Naive thymus-derived CD4-positive, alpha-beta T cell (primary cell): ENCODE measurements at regions of chr2 and their contacts with region 1.

Region 1: GRCh38 chr2:219160186-219161017 is at the start of gene NHEJ1:
- DNase-seq: peak; percentile 84 to 98 (median 92)
- ATAC-seq: peak; percentile 96
- H3K4me3 ChIP-seq: peak within 1 kb of the TSS; percentile 70
- H3K4me3 Mint-ChIP-seq: peak within 1 kb of the TSS; percentile 88 to 97 (median 93)
- H3K27ac ChIP-seq: peak within 1 kb of the TSS; percentile 77
- H3K27ac Mint-ChIP-seq: peak within 1 kb of the TSS; percentile 81 to 97 (median 93)
- H3K4me1 ChIP-seq: peaks cover 11 to 12% of the 10 kb centered on the region in 2 donors
- H3K4me1 Mint-ChIP-seq: peaks cover 13 to 41% (median 24%) of the 10 kb centered on the region in 7 donors
- H3K27me3 ChIP-seq: no peaks in the 10 kb centered on the region
- H3K27me3 Mint-ChIP-seq: no peaks in the 10 kb centered on the region
- total RNA-seq, gene NHEJ1: 11.4 to 24.0 (median 17.9) TPM

Region 2: DNA sequence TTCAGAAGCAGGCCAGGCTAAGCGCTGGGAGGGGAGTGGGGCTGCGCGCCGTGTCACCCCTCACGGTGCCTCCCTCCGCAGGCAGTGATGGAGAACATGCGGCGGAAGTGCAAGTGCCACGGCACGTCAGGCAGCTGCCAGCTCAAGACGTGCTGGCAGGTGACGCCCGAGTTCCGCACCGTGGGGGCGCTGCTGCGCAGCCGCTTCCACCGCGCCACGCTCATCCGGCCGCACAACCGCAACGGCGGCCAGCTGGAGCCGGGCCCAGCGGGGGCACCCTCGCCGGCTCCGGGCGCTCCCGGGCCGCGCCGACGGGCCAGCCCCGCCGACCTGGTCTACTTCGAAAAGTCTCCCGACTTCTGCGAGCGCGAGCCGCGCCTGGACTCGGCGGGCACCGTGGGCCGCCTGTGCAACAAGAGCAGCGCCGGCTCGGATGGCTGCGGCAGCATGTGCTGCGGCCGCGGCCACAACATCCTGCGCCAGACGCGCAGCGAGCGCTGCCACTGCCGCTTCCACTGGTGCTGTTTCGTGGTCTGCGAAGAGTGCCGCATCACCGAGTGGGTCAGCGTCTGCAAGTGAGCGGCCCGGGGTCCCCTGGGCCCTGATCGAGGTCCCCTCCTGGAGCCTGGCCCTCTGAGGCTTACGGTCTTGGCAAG is 267.6 kb before region 1 on chr2:
- CTCF ChIA-PET with region 1: no interaction called
- POLR2A ChIA-PET with region 1: no interaction called
- intact Hi-C with region 1: loop called (anchors 5 kb)
- DNase-seq: peak; percentile 82 to 93 (median 91)
- ATAC-seq: peak; percentile 78
- H3K4me3 ChIP-seq: peak overlapping the region; percentile 48
- H3K4me3 Mint-ChIP-seq: peak overlapping the region; percentile 58 to 85 (median 75)
- H3K27ac ChIP-seq: peak overlapping the region; percentile 89
- H3K27ac Mint-ChIP-seq: peak overlapping the region; percentile 59 to 96 (median 89)
- H3K4me1 ChIP-seq: peaks cover 53 to 54% of the 10 kb centered on the region in 2 donors
- H3K4me1 Mint-ChIP-seq: peaks cover 38 to 56% (median 52%) of the 10 kb centered on the region in 7 donors
- H3K27me3 ChIP-seq: no peaks in the 10 kb centered on the region
- H3K27me3 Mint-ChIP-seq: peaks cover 0 to 76% (median 0%) of the 10 kb centered on the region in 5 donors

Region 3: DNA sequence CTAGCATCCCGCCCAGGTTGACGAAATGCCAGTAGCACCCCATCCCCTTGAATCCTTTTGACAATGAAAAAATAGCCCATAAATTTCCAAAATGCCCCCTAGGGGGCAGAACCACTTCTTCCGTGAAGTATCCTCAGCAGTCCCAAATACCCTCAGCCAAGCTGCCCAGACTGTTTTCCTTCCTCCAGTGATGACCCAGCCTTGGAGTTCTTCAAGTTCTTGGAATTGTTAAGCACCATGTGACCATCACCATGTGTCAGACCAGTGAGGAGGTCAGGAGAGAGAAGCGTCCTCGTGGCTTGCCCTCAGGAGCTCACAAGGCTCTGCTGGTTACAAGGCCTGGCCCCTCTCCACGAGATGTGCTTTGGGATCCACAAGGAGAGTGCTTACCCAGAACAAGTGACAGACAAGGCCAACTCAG is 10.8 kb after region 1 on chr2:
- CTCF ChIA-PET with region 1: interaction called, 20 read pairs
- POLR2A ChIA-PET with region 1: interaction called, 32 read pairs
- intact Hi-C with region 1: loop called in 1 of 2 experiments (anchors 1 kb)
- DNase-seq: peak in 7 of 9 donors; percentile 21 to 55 (median 50)
- ATAC-seq: peak; percentile 69
- H3K4me3 ChIP-seq: no peak overlapping the region
- H3K4me3 Mint-ChIP-seq: no peak overlapping the region
- H3K27ac ChIP-seq: peak overlapping the region; percentile 40
- H3K27ac Mint-ChIP-seq: peak overlapping the region in 7 of 9 donors; percentile 21 to 89 (median 65)
- H3K4me1 ChIP-seq: peaks cover 18 to 27% of the 10 kb centered on the region in 2 donors
- H3K4me1 Mint-ChIP-seq: peaks cover 33 to 44% (median 37%) of the 10 kb centered on the region in 7 donors
- H3K27me3 ChIP-seq: no peaks in the 10 kb centered on the region
- H3K27me3 Mint-ChIP-seq: no peaks in the 10 kb centered on the region

Region 4: GRCh38 chr2:219229305-219230058 is 69.1 kb after region 1 on chr2 and contains the starts of genes ANKZF1 and ATG9A:
- CTCF ChIA-PET with region 1: interaction called, 3 read pairs
- POLR2A ChIA-PET with region 1: interaction called, 3 read pairs
- intact Hi-C with region 1: loop called (anchors 1 kb)
- DNase-seq: peak; percentile 92 to 99 (median 99)
- ATAC-seq: peak; percentile 98
- H3K4me3 ChIP-seq: peak within 1 kb of the TSS; percentile 80
- H3K4me3 Mint-ChIP-seq: peak within 1 kb of the TSS; percentile 94 to 100 (median 98)
- H3K27ac ChIP-seq: peak within 1 kb of the TSS; percentile 90
- H3K27ac Mint-ChIP-seq: peak within 1 kb of the TSS; percentile 96 to 100 (median 96)
- H3K4me1 ChIP-seq: peaks cover 17 to 22% of the 10 kb centered on the region in 2 donors
- H3K4me1 Mint-ChIP-seq: peaks cover 33 to 83% (median 69%) of the 10 kb centered on the region in 7 donors
- H3K27me3 ChIP-seq: no peaks in the 10 kb centered on the region
- H3K27me3 Mint-ChIP-seq: no peaks in the 10 kb centered on the region
- total RNA-seq, gene ANKZF1: 117 to 287 (median 169) TPM
- total RNA-seq, gene ATG9A: 52.6 to 66.0 (median 60.9) TPM

Region 5: GRCh38 chr2:219294356-219295351 is 134.3 kb after region 1 on chr2:
- CTCF ChIA-PET with region 1: interaction called, 35 read pairs
- POLR2A ChIA-PET with region 1: interaction called, 6 read pairs
- intact Hi-C with region 1: loop called (anchors 1 kb)
- DNase-seq: peak; percentile 80 to 93 (median 90)
- ATAC-seq: peak; percentile 99
- H3K4me3 ChIP-seq: peak overlapping the region; percentile 47
- H3K4me3 Mint-ChIP-seq: peak overlapping the region; percentile 68 to 89 (median 82)
- H3K27ac ChIP-seq: peak overlapping the region; percentile 79
- H3K27ac Mint-ChIP-seq: peak overlapping the region; percentile 56 to 88 (median 84)
- H3K4me1 ChIP-seq: peaks cover 2 to 20% of the 10 kb centered on the region in 2 donors
- H3K4me1 Mint-ChIP-seq: peaks cover 11 to 34% (median 27%) of the 10 kb centered on the region in 7 donors
- H3K27me3 ChIP-seq: no peaks in the 10 kb centered on the region
- H3K27me3 Mint-ChIP-seq: peaks cover 0 to 9% (median 0%) of the 10 kb centered on the region in 5 donors

Region 6: GRCh38 chr2:219344751-219345430 is 184.5 kb after region 1 on chr2:
- CTCF ChIA-PET with region 1: no interaction called
- POLR2A ChIA-PET with region 1: no interaction called
- intact Hi-C with region 1: no loop called
- DNase-seq: no peak
- ATAC-seq: no peak
- H3K4me3 ChIP-seq: no peak overlapping the region
- H3K4me3 Mint-ChIP-seq: no peak overlapping the region
- H3K27ac ChIP-seq: no peak overlapping the region
- H3K27ac Mint-ChIP-seq: no peak overlapping the region
- H3K4me1 ChIP-seq: no peaks in the 10 kb centered on the region
- H3K4me1 Mint-ChIP-seq: peaks cover 0 to 8% (median 0%) of the 10 kb centered on the region in 7 donors
- H3K27me3 ChIP-seq: no peaks in the 10 kb centered on the region
- H3K27me3 Mint-ChIP-seq: peaks cover 17 to 41% (median 32%) of the 10 kb centered on the region in 5 donors

Region 7: DNA sequence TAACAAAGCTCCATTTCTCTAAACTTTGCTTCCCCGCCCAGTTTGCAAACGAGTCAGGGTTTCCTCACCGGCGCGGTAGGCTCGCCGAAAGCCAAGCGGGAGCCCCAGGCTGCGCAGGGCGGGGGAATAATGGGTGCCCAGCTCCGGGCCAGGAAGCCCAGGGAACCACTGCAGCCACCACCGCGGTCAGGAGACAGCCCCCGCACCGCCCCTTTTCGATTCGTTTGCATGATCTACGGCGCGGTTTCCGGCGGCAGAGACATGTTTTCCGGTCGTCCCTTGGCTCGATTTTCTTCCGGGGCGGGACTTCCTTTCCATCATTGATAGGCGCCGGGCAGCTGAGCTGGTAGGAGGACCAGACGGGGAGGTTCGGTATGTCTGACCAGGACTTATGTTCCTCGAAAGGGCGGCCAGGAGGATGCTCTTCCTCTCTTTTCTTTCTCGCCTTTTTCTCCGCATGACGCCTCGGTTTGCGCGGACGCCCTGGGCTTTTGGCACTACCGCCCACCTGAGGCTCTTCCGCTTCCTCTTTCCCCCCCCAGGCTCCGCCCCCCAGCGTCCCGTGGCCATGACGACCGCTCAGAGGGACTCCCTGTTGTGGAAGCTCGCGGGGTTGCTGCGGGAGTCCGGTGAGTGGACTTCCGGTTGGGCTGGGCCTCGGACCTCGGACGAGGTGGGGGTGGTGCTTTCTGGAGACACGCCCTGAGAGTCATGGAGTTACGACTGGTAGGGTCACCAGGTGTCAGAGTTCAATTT is 437.3 kb after region 1 on chr2 and contains the start of gene STK11IP:
- CTCF ChIA-PET with region 1: no interaction called
- POLR2A ChIA-PET with region 1: no interaction called
- intact Hi-C with region 1: loop called in 1 of 2 experiments (anchors 5 kb)
- DNase-seq: peak; percentile 76 to 91 (median 87)
- ATAC-seq: peak; percentile 91
- H3K4me3 ChIP-seq: peak within 1 kb of the TSS; percentile 86
- H3K4me3 Mint-ChIP-seq: peak within 1 kb of the TSS; percentile 89 to 99 (median 96)
- H3K27ac ChIP-seq: peak within 1 kb of the TSS; percentile 80
- H3K27ac Mint-ChIP-seq: peak within 1 kb of the TSS; percentile 93 to 98 (median 94)
- H3K4me1 ChIP-seq: peaks cover 5 to 15% of the 10 kb centered on the region in 2 donors
- H3K4me1 Mint-ChIP-seq: peaks cover 14 to 30% (median 21%) of the 10 kb centered on the region in 7 donors
- H3K27me3 ChIP-seq: no peaks in the 10 kb centered on the region
- H3K27me3 Mint-ChIP-seq: peaks cover 3 to 10% (median 6%) of the 10 kb centered on the region in 5 donors
- total RNA-seq, gene STK11IP: 33.6 to 46.4 (median 42.6) TPM